Activated CD8-positive, alpha-beta memory T cell treated with anti-CD3 and anti-CD28 coated beads, Interleukin-2, amount 10 ng/mL, durations not matched to agents 7 days and 5 days (primary cell): ENCODE measurements at regions of chr15 and their contacts with region 1.

Region 1: GRCh38 chr15:64046347-64047153 is at the start of gene DAPK2:
- DNase-seq: peak; percentile 70
- ATAC-seq: peak; percentile 94
- H3K4me3 Mint-ChIP-seq: peak within 1 kb of the TSS; percentile 67
- H3K27ac Mint-ChIP-seq: peak within 1 kb of the TSS; percentile 47
- H3K4me1 Mint-ChIP-seq: peaks cover 17% of the 10 kb centered on the region
- H3K27me3 Mint-ChIP-seq: peaks cover 23% of the 10 kb centered on the region
- total RNA-seq, gene DAPK2: 14.1 to 15.0 TPM

Region 2: DNA sequence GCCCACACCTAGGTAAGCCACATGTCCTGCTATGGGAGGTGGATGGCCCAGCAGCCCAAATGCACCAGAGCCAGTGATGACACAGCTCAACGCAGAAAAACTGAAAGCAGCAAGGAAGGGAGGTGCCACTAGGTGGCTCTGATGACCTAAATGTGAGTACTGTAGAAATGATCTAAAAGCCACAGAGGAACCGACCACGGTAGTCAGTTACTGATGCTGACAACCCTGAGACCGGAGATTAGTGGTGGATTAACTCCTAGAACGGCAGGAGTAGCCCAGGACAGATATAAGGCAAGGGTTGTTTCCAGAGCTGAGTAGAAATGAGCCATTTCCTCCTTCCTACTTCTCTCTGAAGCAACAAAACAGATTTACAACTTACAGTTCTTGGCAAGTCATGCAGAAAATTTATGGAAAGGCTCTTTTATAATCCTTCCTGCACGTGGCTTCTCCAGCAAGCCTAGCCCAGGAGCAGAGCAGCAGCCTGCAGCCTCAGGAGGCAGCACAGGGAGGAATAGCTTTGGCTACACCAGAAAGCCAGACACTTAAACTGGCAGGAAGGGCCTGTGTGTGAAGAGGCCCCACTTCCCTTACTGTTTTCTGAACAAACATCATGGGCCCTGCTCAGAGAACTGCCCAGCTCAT is 436.2 kb before region 1 on chr15:
- CTCF ChIA-PET with region 1: interaction called, 18 read pairs
- DNase-seq: peak; percentile 92
- ATAC-seq: peak; percentile 89
- H3K4me3 Mint-ChIP-seq: peak overlapping the region; percentile 8
- H3K27ac Mint-ChIP-seq: peak overlapping the region; percentile 94
- H3K4me1 Mint-ChIP-seq: peaks cover 39% of the 10 kb centered on the region
- H3K27me3 Mint-ChIP-seq: no peaks in the 10 kb centered on the region

Region 3: DNA sequence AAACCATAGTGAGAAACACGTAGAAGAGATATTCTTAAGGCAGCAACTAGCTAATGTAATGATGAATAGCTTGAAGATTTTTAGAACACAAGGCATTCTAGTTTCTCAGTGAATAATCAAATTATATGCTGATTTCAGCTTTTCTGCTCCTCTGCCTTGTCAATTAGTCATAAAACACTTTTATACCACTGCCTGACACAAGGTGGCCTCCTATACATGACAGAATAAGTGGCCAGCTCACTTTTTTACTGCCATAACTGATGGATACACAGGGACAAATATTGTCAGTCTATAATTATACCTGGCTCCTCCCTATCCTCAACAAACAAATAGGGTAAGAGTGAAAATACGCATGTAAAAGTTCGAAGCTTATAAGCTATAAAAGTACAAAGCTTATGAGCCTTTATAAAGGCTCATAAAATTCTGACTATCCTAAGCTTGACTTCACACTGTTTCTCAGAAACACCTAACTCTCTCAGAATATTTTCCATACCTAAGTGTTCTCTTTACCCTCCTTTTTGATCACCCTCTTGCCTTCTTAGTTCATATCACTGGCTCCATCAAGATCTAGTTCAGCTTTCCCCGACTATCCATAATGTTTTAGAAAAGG is 294.4 kb before region 1 on chr15:
- CTCF ChIA-PET with region 1: interaction called, 48 read pairs
- DNase-seq: peak; percentile 55
- ATAC-seq: peak; percentile 82
- H3K4me3 Mint-ChIP-seq: no peak overlapping the region
- H3K27ac Mint-ChIP-seq: no peak overlapping the region
- H3K4me1 Mint-ChIP-seq: peaks cover 7% of the 10 kb centered on the region
- H3K27me3 Mint-ChIP-seq: no peaks in the 10 kb centered on the region

Region 4: GRCh38 chr15:63891079-63891767 is 155.3 kb before region 1 on chr15:
- CTCF ChIA-PET with region 1: interaction called, 53 read pairs
- DNase-seq: peak; percentile 83
- ATAC-seq: peak; percentile 29
- H3K4me3 Mint-ChIP-seq: no peak overlapping the region
- H3K27ac Mint-ChIP-seq: peak overlapping the region; percentile 87
- H3K4me1 Mint-ChIP-seq: peaks cover 61% of the 10 kb centered on the region
- H3K27me3 Mint-ChIP-seq: no peaks in the 10 kb centered on the region

Region 5: GRCh38 chr15:63950911-63951481 is 95.6 kb before region 1 on chr15:
- CTCF ChIA-PET with region 1: interaction called, 45 read pairs
- DNase-seq: no peak
- ATAC-seq: no peak
- H3K4me3 Mint-ChIP-seq: no peak overlapping the region
- H3K27ac Mint-ChIP-seq: no peak overlapping the region
- H3K4me1 Mint-ChIP-seq: peaks cover 9% of the 10 kb centered on the region
- H3K27me3 Mint-ChIP-seq: peaks cover 3% of the 10 kb centered on the region

Region 6: DNA sequence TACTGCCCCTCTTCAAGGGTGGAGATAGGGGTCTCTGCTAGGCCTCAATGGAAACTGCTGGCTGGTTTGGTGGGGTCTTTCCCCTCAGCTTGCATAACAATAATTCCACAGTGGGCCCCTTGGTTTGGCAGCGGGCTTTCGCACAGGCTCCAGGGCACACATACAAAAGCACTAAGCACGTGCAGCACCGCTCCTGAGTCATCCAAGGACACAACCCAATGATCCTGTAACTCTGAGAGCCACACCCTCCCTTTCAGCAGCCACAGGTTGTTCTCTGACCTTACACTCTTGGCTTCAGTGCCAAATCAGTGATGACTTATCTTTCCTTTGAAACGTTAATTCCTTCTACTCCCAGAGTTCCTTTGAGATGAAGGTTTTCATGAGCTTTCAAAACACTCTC is 42.0 kb before region 1 on chr15:
- CTCF ChIA-PET with region 1: interaction called, 11 read pairs
- DNase-seq: no peak
- ATAC-seq: no peak
- H3K4me3 Mint-ChIP-seq: no peak overlapping the region
- H3K27ac Mint-ChIP-seq: no peak overlapping the region
- H3K4me1 Mint-ChIP-seq: peaks cover 45% of the 10 kb centered on the region
- H3K27me3 Mint-ChIP-seq: no peaks in the 10 kb centered on the region

Region 7: DNA sequence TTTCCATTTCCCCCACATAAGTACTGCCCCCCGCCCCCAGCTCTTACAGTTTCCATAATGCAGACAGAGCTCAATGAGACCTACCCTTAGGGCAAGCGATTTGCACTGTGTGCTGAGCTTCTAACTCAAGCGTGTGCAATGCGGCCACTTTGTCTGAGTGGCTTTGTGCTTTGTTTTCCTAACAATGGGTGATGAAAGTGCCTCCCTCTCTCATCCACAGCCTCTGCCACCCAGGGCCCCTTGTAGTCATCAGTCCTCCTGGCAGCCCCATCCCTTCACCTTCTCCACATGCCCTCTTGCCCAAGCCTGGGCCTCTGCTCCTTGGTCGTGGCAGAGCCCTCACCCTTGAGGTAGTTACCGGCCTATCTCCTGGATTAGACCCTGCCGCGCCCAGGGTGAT is 17.4 kb before region 1 on chr15:
- CTCF ChIA-PET with region 1: interaction called, 37 read pairs
- DNase-seq: no peak
- ATAC-seq: peak; percentile 13
- H3K4me3 Mint-ChIP-seq: peak overlapping the region; percentile 65
- H3K27ac Mint-ChIP-seq: peak overlapping the region; percentile 81
- H3K4me1 Mint-ChIP-seq: peaks cover 68% of the 10 kb centered on the region
- H3K27me3 Mint-ChIP-seq: no peaks in the 10 kb centered on the region

Region 8: GRCh38 chr15:64082757-64083156 is 36.2 kb after region 1 on chr15:
- CTCF ChIA-PET with region 1: no interaction called
- DNase-seq: no peak
- ATAC-seq: no peak
- H3K4me3 Mint-ChIP-seq: no peak overlapping the region
- H3K27ac Mint-ChIP-seq: no peak overlapping the region
- H3K4me1 Mint-ChIP-seq: peaks cover 2% of the 10 kb centered on the region
- H3K27me3 Mint-ChIP-seq: no peaks in the 10 kb centered on the region